Dorsolateral prefrontal cortex (tissue), 120 donors: ENCODE measurements at regions of chr1 and their contacts with region 1.

Region 1: GRCh38 chr1:77683160-77684148 is 996 bp upstream of the ZZZ3 start:
- DNase-seq: peak; percentile 81 to 94 (median 90)
- H3K4me3 ChIP-seq: peak overlapping the region; percentile 52 to 98 (median 87)
- H3K27ac ChIP-seq: peak overlapping the region; percentile 83 to 100 (median 99)
- H3K27me3 ChIP-seq: no peaks in the 10 kb centered on the region
- CTCF ChIP-seq: peak; percentile 58 to 96 (median 88)

Region 2: DNA sequence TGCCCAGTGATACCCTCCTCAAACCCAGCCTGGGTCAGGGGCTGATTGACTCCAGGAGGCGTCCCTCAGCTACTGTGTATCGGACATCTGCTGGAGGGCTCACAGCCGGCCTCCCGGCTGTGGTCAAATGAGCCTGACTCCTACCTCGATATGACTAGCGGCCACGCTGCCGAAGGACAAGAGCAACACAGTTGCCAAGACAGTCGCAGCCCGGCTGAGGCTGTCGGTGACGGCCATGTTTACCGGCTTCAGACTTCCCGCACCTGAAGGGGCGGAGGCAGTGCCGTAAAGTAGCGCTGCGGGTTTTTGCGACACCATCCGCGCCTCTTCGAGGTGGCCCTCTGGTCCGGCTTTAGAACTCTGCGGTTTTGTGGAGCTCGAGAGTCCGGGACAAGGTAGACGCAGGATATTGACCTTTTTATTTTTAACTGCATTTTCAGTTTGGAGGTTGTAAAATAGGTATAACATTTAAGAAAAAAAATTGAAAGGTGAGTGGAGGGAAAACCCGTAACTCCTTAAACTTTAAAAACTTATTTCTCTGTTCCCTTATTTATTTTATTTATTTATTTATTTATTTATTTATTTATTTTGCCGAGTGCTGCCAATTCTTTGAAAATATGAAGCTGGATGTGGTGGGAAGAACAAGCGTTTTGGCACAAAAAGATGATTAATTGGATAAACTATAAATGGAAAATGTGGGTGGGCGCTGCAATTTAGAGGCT is 464.1 kb before region 1 on chr1 and contains the start of gene PIGK:
- intact Hi-C with region 1: loop called in 1 of 2 experiments (anchors 5 kb)
- DNase-seq: peak; percentile 75 to 90 (median 86)
- H3K4me3 ChIP-seq: peak within 1 kb of the TSS; percentile 54 to 97 (median 84)
- H3K27ac ChIP-seq: peak within 1 kb of the TSS; percentile 26 to 97 (median 89)
- H3K27me3 ChIP-seq: no peaks in the 10 kb centered on the region
- CTCF ChIP-seq: peak in 42 of 56 donors; percentile 3 to 54 (median 30)
- total RNA-seq, gene PIGK: 15.2 to 61.9 (median 34.6) TPM

Region 3: DNA sequence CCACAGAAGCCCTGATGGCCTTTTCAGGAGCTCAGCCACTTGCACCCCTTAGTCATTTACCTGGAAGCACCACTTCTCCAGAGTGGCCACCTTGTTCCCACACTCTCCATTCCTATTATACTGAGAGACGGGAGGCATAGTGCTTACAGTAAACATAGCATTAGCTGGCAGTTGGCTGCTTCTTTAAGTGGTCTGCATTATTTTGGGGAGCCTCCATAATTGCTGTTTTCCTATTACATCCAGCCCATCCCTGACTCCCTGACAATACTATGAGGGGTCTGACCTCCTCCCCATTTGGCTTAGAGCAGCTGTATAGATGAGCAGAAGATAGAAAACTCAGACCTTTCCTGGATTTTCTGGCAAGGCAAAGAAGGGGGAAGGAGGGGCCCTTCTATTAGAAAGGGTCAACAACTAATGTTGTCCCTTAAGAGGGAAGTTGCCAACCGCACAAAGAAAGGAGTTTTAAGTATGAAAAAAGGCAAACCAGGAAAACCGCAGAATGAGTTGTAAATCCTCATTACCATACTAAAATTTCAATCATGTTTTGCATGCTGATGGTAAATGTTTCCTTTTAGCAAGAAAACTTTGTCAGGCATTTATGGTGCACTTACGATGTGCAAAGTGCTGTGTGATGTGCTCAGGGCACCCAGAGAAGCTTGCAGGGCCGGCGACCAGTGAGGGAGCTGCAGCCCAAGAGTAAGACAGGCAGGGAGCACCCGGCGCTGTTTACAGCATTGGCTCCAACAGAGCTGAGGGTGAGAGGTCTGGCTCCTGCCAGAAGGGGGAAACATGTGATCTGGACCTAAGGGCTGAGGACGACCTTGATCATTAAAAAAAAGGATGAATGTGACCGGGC is 168.3 kb before region 1 on chr1:
- intact Hi-C with region 1: loop called in 1 of 2 experiments (anchors 2 kb)
- DNase-seq: peak in 9 of 10 donors; percentile 53 to 84 (median 72)
- H3K4me3 ChIP-seq: peak overlapping the region in 31 of 59 donors; percentile 1 to 53 (median 23)
- H3K27ac ChIP-seq: peak overlapping the region; percentile 80 to 100 (median 97)
- H3K27me3 ChIP-seq: no peaks in the 10 kb centered on the region
- CTCF ChIP-seq: peak in 43 of 56 donors; percentile 4 to 65 (median 39)

Region 4: DNA sequence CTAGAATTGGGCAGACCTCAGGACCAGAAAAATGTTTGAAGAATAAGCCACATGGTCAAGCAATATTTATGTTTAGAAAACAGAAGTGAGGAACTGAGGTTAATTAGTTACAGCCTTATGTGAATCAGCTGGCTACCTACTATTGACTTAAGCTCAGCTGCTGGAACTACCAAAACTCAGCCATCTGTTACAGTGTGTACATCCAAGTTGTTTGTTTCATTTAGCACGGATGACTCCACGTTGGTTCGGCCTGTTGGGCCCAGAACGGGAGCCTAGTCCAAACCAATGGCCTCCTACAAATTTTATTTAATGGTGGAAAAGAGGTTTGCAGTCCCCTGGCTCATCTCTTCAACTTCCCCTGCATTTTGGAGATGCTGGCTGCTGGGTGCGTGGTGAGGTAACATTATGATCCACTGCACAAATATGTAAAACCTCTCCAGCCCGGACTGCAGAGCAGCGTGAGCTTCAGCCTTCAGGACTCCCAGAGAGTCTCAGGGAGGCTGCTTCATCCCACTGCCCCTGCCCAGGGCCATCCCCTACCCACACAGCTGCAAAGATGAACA is 144.4 kb before region 1 on chr1:
- intact Hi-C with region 1: loop called (anchors 5 kb)
- DNase-seq: no peak
- H3K4me3 ChIP-seq: peak overlapping the region in 1 of 59 donors; percentile 6
- H3K27ac ChIP-seq: peak overlapping the region; percentile 13 to 94 (median 80)
- H3K27me3 ChIP-seq: no peaks in the 10 kb centered on the region
- CTCF ChIP-seq: no peak